ENCODE measurements at regions of chr2 and their contacts with region 1.

Region 1: DNA sequence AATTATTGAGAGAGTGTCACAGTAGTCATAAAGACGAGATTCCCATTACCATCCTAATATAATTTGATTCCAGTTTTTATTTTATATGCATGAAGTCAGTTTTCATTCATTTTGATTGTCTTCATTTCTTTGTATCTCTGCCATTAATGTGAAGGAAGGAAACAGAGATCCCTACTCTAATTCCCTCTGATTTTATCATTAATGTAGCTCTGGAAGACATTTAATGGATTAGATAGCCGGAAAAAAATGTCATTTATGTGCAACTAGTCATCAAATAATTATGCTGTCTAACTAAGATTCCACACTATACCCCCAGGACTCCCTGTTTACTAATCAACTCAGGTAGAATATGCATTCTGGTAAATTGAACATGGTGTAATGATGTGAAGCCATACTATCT is 19.9 kb downstream of the RHBDD1 start:
- DNase-seq: no peak
- ATAC-seq: no peak
- H3K4me3 ChIP-seq: no peak overlapping the region
- H3K27ac ChIP-seq: no peak overlapping the region
- H3K4me1 ChIP-seq: no peaks in the 10 kb centered on the region
- H3K27me3 ChIP-seq: no peaks in the 10 kb centered on the region
- CTCF ChIP-seq: no peak

Region 2: GRCh38 chr2:226283796-226284195 is 572.0 kb before region 1 on chr2:
- CTCF ChIA-PET with region 1: no interaction called
- POLR2A ChIA-PET with region 1: no interaction called
- in situ Hi-C with region 1: no loop called
- intact Hi-C with region 1: no loop called
- DNase-seq: no peak
- ATAC-seq: no peak
- H3K4me3 ChIP-seq: no peak overlapping the region
- H3K27ac ChIP-seq: no peak overlapping the region
- H3K4me1 ChIP-seq: no peaks in the 10 kb centered on the region
- H3K27me3 ChIP-seq: no peaks in the 10 kb centered on the region
- CTCF ChIP-seq: no peak

Region 3: GRCh38 chr2:226887940-226888339 is 32.2 kb after region 1 on chr2:
- CTCF ChIA-PET with region 1: no interaction called
- POLR2A ChIA-PET with region 1: no interaction called
- in situ Hi-C with region 1: no loop called
- intact Hi-C with region 1: loop called (anchors 1 kb)
- DNase-seq: no peak
- ATAC-seq: no peak
- H3K4me3 ChIP-seq: no peak overlapping the region
- H3K27ac ChIP-seq: no peak overlapping the region
- H3K4me1 ChIP-seq: no peaks in the 10 kb centered on the region
- H3K27me3 ChIP-seq: no peaks in the 10 kb centered on the region
- CTCF ChIP-seq: no peak